KBM-7 (cell line): ENCODE measurements at regions of chr5 and their contacts with region 1.

Region 1: DNA sequence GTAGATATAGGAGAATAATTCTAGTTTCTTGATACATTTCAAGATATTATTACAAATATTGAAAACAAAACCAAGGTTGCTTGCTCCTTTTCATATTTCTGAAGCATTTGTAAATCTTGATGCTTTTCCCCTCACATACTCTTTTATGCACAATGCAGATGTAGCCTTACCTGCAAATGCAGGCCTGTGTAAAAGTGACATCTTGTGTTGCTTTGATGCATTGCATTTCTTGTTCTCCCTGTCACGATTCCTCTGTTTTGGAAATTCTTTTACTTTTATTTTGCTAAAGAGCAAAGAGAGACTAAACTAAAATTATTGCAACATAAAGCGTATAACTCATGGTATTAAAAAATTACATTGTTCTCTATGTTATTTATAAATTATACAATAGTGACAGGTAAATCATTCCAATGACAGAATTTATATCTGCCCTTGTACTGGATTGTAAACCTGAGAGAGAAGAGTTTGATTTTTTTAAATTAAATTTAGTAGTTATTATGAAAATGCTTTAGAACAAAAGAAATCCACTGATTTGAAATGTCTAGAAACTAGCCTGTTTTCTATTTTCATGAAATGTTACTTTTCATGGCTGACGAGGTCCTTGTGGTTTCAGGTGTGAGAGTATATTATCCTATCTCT is 970.0 kb downstream of the MAT2B start:
- DNase-seq: peak; percentile 52

Region 2: DNA sequence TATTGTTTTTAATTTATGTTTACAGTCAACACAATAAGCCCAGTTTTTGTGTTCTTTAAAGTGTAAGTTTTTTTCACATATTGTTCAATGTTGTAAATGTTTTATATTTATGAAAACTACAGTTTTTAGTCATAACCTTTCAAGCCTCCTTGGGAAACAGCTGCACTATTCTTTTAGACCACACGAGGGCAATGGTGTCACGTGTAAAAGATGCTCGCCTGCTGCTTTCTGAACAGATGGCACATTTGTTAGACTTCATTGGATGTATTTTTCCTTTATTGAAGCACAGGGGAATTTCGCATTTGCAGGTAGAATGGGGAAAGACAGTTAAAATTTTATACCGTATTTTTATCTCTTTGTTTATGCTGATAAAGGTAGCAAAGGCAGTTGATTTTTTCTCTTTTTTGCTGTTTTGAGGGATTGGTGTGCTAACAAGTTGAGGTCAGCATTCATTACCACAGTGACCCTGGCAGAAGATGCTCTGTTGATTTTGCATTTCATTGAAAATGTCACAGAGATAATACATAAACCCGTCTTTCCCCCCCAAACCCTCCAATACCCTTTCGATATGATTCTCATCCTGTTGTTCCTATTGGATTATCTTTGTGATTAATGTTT is 911.0 kb before region 1 on chr5:
- in situ Hi-C with region 1: loop called (anchors 25 kb)
- DNase-seq: peak; percentile 72

Region 3: GRCh38 chr5:164052536-164053093 is 422.8 kb before region 1 on chr5:
- in situ Hi-C with region 1: loop called (anchors 25 kb)
- DNase-seq: no peak

Region 4: GRCh38 chr5:164265566-164265965 is 209.9 kb before region 1 on chr5:
- in situ Hi-C with region 1: no loop called
- DNase-seq: no peak

Region 5: DNA sequence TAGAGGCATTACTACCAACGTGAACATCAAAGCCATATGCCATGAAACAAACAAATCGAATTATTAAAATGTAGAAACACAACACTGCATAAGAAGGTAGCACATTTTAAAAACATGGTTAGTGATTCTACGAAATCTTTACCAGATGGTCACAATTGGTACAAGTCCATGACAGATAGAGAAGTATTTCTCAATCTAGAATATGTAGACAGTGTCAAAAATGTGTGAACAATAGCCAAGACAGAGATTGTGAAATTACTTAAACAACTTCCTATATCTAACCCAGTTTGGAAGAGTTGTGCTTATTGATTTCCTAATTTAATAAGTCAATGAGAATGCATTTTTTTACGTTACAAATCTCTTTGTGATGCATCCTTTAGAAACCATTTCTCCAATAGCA is 151.6 kb after region 1 on chr5:
- in situ Hi-C with region 1: no loop called
- DNase-seq: no peak

Region 6: DNA sequence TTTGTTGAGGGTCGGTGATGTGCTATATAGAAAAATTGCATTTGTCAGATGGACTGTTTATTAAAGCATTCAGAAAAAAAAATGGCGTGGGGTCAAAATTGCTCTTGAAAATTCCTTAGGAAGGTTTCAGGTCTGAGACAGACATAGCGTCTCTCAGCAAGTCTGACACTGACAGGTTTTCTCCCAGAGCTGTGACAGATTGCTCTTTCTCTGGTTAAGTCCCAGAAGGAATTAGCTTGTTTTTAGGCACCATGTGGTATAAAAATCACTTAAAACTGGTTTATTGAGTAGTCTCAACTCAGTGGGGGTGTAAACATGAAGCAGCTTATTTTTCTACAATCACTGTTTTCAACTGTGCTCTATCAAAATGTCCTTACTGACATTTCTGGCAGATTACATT is 409.7 kb after region 1 on chr5:
- in situ Hi-C with region 1: no loop called
- DNase-seq: no peak